ENCODE measurements at regions of chr17 and their contacts with region 1.

Region 1: GRCh38 chr17:17877529-17878358 is 41.0 kb upstream of the SREBF1 start:
- DNase-seq: no peak
- ATAC-seq: no peak
- H3K4me3 ChIP-seq: no peak overlapping the region
- H3K27ac ChIP-seq: no peak overlapping the region
- H3K4me1 ChIP-seq: no peaks in the 10 kb centered on the region
- H3K27me3 ChIP-seq: no peaks in the 10 kb centered on the region
- CTCF ChIP-seq: no peak

Region 2: DNA sequence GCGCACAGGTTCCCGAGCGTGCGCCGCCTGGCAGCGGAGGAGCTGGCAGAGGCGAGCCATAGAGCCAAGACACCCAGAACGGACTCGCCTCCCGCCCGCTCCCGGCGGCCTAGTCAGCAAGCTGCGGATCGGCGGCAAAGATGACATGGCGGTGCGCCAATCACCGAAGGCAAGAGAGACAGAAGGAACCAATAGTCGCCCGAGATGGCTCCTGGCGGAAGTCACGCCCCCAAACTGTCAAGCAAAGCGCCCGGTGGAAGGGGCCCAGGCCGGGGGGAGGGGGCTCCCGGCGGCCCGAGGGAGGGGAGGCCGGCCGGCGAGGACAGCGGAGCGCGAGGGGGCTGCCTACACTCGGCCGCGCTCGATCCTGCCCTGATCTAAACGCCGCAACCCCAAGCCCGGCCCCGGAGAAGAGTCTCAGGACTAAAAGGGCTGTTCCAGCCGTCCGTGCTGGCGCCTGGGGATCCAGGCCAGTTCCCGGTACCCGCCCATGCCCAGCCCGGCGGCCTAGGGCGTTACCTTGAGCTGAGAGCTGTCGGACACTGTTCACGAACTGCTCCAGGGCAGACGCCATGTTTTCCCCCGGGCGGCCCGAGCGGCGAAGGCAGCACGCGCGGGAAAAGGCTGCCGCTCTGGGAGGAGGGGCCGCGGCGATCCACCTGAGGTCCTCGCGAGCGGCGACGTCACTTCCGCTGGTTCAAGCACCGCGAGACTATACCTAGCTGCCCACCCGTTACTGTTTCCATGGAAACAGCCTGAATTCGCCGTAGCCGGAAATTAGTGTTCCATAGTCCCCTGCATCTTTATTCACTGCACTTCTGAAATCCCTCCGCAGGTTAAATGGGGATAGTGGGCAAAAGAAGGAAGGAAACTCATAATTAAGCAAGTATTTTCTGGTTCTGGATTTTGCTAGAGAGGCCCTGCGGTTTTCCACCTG is 596.9 kb before region 1 on chr17 and contains the start of gene COPS3:
- CTCF ChIA-PET with region 1: no interaction called
- POLR2A ChIA-PET with region 1: no interaction called
- in situ Hi-C with region 1: no loop called
- intact Hi-C with region 1: no loop called
- DNase-seq: peak; percentile 82
- ATAC-seq: peak; percentile 98
- H3K4me3 ChIP-seq: peak within 1 kb of the TSS; percentile 69 to 75
- H3K27ac ChIP-seq: peak within 1 kb of the TSS; percentile 94
- H3K4me1 ChIP-seq: peaks cover 7% of the 10 kb centered on the region
- H3K27me3 ChIP-seq: no peaks in the 10 kb centered on the region
- CTCF ChIP-seq: no peak
- total RNA-seq, gene COPS3: 73.6 TPM

Region 3: DNA sequence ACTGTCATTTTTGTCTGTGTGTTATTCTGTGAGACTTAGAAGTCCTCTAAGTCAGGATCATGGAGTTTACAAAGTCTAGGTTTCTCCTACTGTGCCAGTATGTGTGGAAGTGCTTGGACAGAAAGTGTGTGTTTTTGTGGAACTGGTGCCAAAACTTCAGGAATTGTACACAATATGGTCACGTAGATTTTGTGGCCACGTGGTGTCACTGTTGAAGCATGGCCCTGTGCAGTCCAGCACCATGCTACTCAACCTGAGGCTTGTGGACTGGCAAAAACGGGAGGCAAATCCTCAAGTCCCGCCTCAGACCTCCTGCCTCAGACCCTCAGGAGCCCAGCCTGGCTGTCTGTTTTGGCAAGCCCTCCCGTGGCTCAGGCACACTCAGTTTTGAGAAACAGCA is 289.1 kb after region 1 on chr17:
- CTCF ChIA-PET with region 1: no interaction called
- POLR2A ChIA-PET with region 1: interaction called, 17 read pairs
- in situ Hi-C with region 1: no loop called
- intact Hi-C with region 1: no loop called
- DNase-seq: no peak
- ATAC-seq: 0 out of 2 replicates have a peak, but pooled peaks have one; percentile 56
- H3K4me3 ChIP-seq: no peak overlapping the region
- H3K27ac ChIP-seq: no peak overlapping the region
- H3K4me1 ChIP-seq: no peaks in the 10 kb centered on the region
- H3K27me3 ChIP-seq: no peaks in the 10 kb centered on the region
- CTCF ChIP-seq: no peak